ENCODE measurements at regions of chr17 and their contacts with region 1.

Region 1: GRCh38 chr17:63834431-63835166 is 7.1 kb upstream of the FTSJ3 start:
- DNase-seq: peak; percentile 92 to 95
- ATAC-seq: peak; percentile 82 to 93
- H3K4me3 ChIP-seq: no peak overlapping the region
- H3K27ac ChIP-seq: peak overlapping the region in 1 of 2 experiments; percentile 70; a peak in 3 of 6 replicates
- H3K4me1 ChIP-seq: peaks cover 20% of the 10 kb centered on the region; the same call in 2 of the 3 replicates
- CTCF ChIP-seq: peak; percentile 94
- EP300 ChIP-seq: no peak
- POLR2A ChIP-seq: no peak
- RAD21 ChIP-seq: peak; percentile 59 to 65

Region 2: GRCh38 chr17:63809970-63810369 is 24.6 kb before region 1 on chr17:
- CTCF ChIA-PET with region 1: interaction called, 10 read pairs
- POLR2A ChIA-PET with region 1: no interaction called
- DNase-seq: no peak
- ATAC-seq: no peak
- H3K4me3 ChIP-seq: no peak overlapping the region
- H3K27ac ChIP-seq: no peak overlapping the region
- H3K4me1 ChIP-seq: no peaks in the 10 kb centered on the region
- CTCF ChIP-seq: no peak
- EP300 ChIP-seq: no peak
- POLR2A ChIP-seq: no peak
- RAD21 ChIP-seq: no peak

Region 3: GRCh38 chr17:63819585-63820537 is 14.7 kb before region 1 on chr17:
- CTCF ChIA-PET with region 1: interaction called, 37 read pairs
- POLR2A ChIA-PET with region 1: no interaction called
- DNase-seq: no peak
- ATAC-seq: peak; percentile 14 to 44; a peak in 5 of 6 replicates
- H3K4me3 ChIP-seq: no peak overlapping the region
- H3K27ac ChIP-seq: peak overlapping the region in 1 of 2 experiments; percentile 72; a peak in 4 of 6 replicates
- H3K4me1 ChIP-seq: peaks cover 24% of the 10 kb centered on the region
- CTCF ChIP-seq: no peak
- EP300 ChIP-seq: no peak
- POLR2A ChIP-seq: no peak
- RAD21 ChIP-seq: no peak